ENCODE measurements at regions of chr10 and their contacts with region 1.

Region 1: DNA sequence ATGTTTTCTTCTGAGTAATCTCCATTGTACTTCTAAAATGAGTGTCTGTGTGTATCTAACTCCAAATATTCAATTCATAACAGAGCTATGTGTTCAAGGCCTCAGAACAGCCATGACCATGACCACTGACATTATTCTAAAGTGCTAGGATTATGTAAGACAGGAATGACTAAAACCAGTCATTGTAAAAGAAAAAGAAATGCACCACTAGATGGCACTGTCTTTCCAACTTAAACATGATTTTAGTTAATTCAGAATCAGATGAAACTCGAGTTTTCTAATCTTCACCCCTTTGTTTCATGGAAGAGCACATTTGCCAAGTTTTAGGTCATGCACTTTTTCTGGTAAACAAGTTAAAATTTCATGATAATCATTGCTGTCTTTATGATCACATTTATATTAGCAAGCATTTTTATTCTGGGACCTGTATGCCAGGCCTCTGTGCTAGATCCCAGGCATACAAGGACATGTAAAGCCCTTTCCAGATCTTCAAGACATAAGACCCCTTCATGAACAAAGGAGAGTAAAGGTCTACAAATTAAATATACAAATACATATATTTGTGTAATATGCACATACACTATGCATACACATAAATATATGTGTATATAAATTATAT is 26.1 kb upstream of the RSU1 start:
- DNase-seq: peak; percentile 83
- ATAC-seq: peak; percentile 64
- H3K4me3 ChIP-seq: no peak overlapping the region
- H3K27ac ChIP-seq: no peak overlapping the region
- H3K4me1 ChIP-seq: no peaks in the 10 kb centered on the region; the same call in 1 of the 2 replicates
- H3K27me3 ChIP-seq: no peaks in the 10 kb centered on the region
- CTCF ChIP-seq: peak; percentile 58

Region 2: GRCh38 chr10:16944402-16944801 is 101.0 kb after region 1 on chr10:
- CTCF ChIA-PET with region 1: no interaction called
- POLR2A ChIA-PET with region 1: no interaction called
- intact Hi-C with region 1: loop called (anchors 10 kb)
- DNase-seq: no peak
- ATAC-seq: no peak
- H3K4me3 ChIP-seq: no peak overlapping the region
- H3K27ac ChIP-seq: no peak overlapping the region
- H3K4me1 ChIP-seq: no peaks in the 10 kb centered on the region
- H3K27me3 ChIP-seq: no peaks in the 10 kb centered on the region
- CTCF ChIP-seq: no peak

Region 3: GRCh38 chr10:17113889-17114540 is 270.7 kb after region 1 on chr10:
- CTCF ChIA-PET with region 1: interaction called, 10 read pairs
- POLR2A ChIA-PET with region 1: no interaction called
- intact Hi-C with region 1: no loop called
- DNase-seq: no peak
- ATAC-seq: no peak
- H3K4me3 ChIP-seq: no peak overlapping the region
- H3K27ac ChIP-seq: peak overlapping the region; percentile 96
- H3K4me1 ChIP-seq: peaks cover 37% of the 10 kb centered on the region
- H3K27me3 ChIP-seq: no peaks in the 10 kb centered on the region
- CTCF ChIP-seq: no peak

Region 4: GRCh38 chr10:17249820-17250219 is 406.5 kb after region 1 on chr10:
- CTCF ChIA-PET with region 1: no interaction called
- POLR2A ChIA-PET with region 1: no interaction called
- intact Hi-C with region 1: loop called (anchors 1 kb)
- DNase-seq: peak; percentile 46
- ATAC-seq: peak; percentile 80
- H3K4me3 ChIP-seq: no peak overlapping the region
- H3K27ac ChIP-seq: no peak overlapping the region
- H3K4me1 ChIP-seq: no peaks in the 10 kb centered on the region
- H3K27me3 ChIP-seq: no peaks in the 10 kb centered on the region
- CTCF ChIP-seq: peak; percentile 59